ENCODE measurements at regions of chr6 and their contacts with region 1.

Region 1: GRCh38 chr6:34583461-34583860 is 27.3 kb upstream of the SPDEF start:
- DNase-seq: no peak
- H3K4me3 ChIP-seq: no peak overlapping the region
- H3K27ac ChIP-seq: no peak overlapping the region
- H3K4me1 ChIP-seq: peaks cover 0 to 3% of the 10 kb centered on the region in 2 donors
- H3K27me3 ChIP-seq: no peaks in the 10 kb centered on the region
- CTCF ChIP-seq: peak in 2 of 3 donors; percentile 9 to 15
- POLR2A ChIP-seq: no peak

Region 2: DNA sequence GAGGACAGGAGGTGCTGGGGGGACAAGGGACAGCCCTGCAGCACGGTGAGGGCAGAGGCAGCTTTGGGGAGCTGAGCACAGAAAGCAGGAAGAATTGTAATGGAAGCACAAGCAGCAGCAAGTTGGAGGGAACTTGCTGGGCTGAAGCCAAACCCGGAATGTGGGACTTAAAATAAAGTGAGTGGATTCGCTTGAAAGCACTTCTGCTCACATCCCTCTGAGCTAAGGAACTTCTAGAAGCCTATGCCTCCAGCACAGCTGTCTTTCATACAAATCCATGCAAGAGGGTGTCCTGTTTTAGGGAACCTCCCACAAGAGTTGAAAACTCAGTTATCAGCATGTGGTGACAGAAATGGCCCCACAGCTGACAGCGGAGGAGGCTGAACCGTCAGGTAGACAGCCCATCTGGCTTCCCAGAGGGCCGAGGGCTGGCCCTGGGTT is 708.3 kb before region 1 on chr6:
- intact Hi-C with region 1: loop called (anchors 5 kb)
- DNase-seq: no peak
- H3K4me3 ChIP-seq: no peak overlapping the region
- H3K27ac ChIP-seq: no peak overlapping the region
- H3K4me1 ChIP-seq: no peaks in the 10 kb centered on the region
- H3K27me3 ChIP-seq: no peaks in the 10 kb centered on the region
- CTCF ChIP-seq: no peak
- POLR2A ChIP-seq: no peak

Region 3: GRCh38 chr6:34610819-34611477 is 27.5 kb after region 1 on chr6:
- intact Hi-C with region 1: no loop called
- DNase-seq: no peak
- H3K4me3 ChIP-seq: no peak overlapping the region
- H3K27ac ChIP-seq: no peak overlapping the region
- H3K4me1 ChIP-seq: no peaks in the 10 kb centered on the region
- H3K27me3 ChIP-seq: no peaks in the 10 kb centered on the region
- CTCF ChIP-seq: no peak
- POLR2A ChIP-seq: no peak